ENCODE measurements at regions of chr4 and their contacts with region 1.

Region 1: GRCh38 chr4:13881892-13882291 is 254.4 kb upstream of the BOD1L1 start:
- DNase-seq: no peak
- H3K4me3 ChIP-seq: no peak overlapping the region
- H3K27ac ChIP-seq: no peak overlapping the region
- H3K4me1 ChIP-seq: no peaks in the 10 kb centered on the region
- H3K27me3 ChIP-seq: no peaks in the 10 kb centered on the region
- CTCF ChIP-seq: peak in 1 of 2 donors; percentile 46

Region 2: GRCh38 chr4:13821522-13821921 is 60.4 kb before region 1 on chr4:
- CTCF ChIA-PET with region 1: no interaction called
- dilution Hi-C with region 1: no loop called
- in situ Hi-C with region 1: no loop called
- intact Hi-C with region 1: no loop called
- DNase-seq: no peak
- H3K4me3 ChIP-seq: no peak overlapping the region
- H3K27ac ChIP-seq: no peak overlapping the region
- H3K4me1 ChIP-seq: no peaks in the 10 kb centered on the region
- H3K27me3 ChIP-seq: no peaks in the 10 kb centered on the region
- CTCF ChIP-seq: no peak

Region 3: DNA sequence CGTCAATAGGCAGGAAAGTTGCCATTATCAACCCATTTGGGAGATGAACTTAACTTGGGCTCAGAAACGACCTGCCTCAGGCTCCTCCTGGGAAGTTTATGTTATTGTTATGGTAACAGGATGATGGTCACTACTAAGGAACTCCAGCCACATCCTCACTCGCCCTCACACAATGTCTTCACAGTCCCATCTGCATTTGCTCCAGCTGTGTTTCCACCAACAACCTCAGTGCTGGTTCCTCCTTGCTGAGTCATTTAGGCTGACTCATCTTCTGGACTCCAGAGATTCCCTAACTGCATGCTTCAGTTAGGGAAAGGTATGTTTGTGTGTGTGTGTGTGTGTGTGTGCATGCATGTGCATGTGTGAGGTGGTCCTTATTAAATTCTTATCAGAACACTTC is 39.0 kb after region 1 on chr4:
- CTCF ChIA-PET with region 1: no interaction called
- dilution Hi-C with region 1: no loop called
- in situ Hi-C with region 1: no loop called
- intact Hi-C with region 1: no loop called
- DNase-seq: peak; percentile 100
- H3K4me3 ChIP-seq: no peak overlapping the region
- H3K27ac ChIP-seq: peak overlapping the region; percentile 100
- H3K4me1 ChIP-seq: peaks cover 52% of the 10 kb centered on the region
- H3K27me3 ChIP-seq: no peaks in the 10 kb centered on the region
- CTCF ChIP-seq: no peak

Region 4: GRCh38 chr4:14254252-14254651 is 372.4 kb after region 1 on chr4:
- CTCF ChIA-PET with region 1: no interaction called
- dilution Hi-C with region 1: no loop called
- in situ Hi-C with region 1: no loop called
- intact Hi-C with region 1: loop called (anchors 1 kb)
- DNase-seq: peak; percentile 46
- H3K4me3 ChIP-seq: no peak overlapping the region
- H3K27ac ChIP-seq: no peak overlapping the region
- H3K4me1 ChIP-seq: no peaks in the 10 kb centered on the region
- H3K27me3 ChIP-seq: no peaks in the 10 kb centered on the region
- CTCF ChIP-seq: peak; percentile 78 to 93

Region 5: DNA sequence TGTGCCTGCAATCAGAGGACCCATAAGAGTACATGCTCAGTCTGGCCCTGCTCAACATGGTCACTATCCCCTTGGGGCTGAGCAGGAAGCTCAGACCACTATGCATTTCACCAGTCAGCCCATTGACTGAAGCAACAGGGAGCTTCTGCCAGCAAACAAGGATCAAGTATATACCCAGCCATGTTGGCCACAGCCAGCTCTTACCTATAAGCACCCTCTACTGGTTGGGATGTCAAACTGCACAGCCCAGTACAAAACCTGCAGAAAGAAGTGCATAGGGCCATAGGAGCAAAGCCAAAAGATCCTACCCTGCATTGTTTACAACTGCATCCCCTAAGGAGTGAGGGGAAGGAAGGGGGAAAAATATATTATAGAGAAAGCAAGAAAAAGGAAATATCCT is 906.0 kb after region 1 on chr4:
- CTCF ChIA-PET with region 1: no interaction called
- dilution Hi-C with region 1: no loop called
- in situ Hi-C with region 1: no loop called
- intact Hi-C with region 1: loop called (anchors 5 kb)
- DNase-seq: peak; percentile 40
- H3K4me3 ChIP-seq: no peak overlapping the region
- H3K27ac ChIP-seq: no peak overlapping the region
- H3K4me1 ChIP-seq: peaks cover 18% of the 10 kb centered on the region
- H3K27me3 ChIP-seq: no peaks in the 10 kb centered on the region
- CTCF ChIP-seq: peak; percentile 58 to 67